ENCODE measurements at regions of chr6 and their contacts with region 1.

Region 1: GRCh38 chr6:70706491-70707123 is 38.9 kb downstream of the SMAP1 start:
- DNase-seq: no peak
- ATAC-seq: no peak

Region 2: GRCh38 chr6:70884074-70884983 is 177.7 kb after region 1 on chr6:
- intact Hi-C with region 1: loop called (anchors 5 kb)
- DNase-seq: peak; percentile 68
- ATAC-seq: peak; percentile 91

Region 3: GRCh38 chr6:70955441-70956190 is 249.0 kb after region 1 on chr6:
- intact Hi-C with region 1: loop called (anchors 10 kb)
- DNase-seq: peak; percentile 90
- ATAC-seq: peak; percentile 98